ENCODE measurements at regions of chr15 and their contacts with region 1.

Region 1: DNA sequence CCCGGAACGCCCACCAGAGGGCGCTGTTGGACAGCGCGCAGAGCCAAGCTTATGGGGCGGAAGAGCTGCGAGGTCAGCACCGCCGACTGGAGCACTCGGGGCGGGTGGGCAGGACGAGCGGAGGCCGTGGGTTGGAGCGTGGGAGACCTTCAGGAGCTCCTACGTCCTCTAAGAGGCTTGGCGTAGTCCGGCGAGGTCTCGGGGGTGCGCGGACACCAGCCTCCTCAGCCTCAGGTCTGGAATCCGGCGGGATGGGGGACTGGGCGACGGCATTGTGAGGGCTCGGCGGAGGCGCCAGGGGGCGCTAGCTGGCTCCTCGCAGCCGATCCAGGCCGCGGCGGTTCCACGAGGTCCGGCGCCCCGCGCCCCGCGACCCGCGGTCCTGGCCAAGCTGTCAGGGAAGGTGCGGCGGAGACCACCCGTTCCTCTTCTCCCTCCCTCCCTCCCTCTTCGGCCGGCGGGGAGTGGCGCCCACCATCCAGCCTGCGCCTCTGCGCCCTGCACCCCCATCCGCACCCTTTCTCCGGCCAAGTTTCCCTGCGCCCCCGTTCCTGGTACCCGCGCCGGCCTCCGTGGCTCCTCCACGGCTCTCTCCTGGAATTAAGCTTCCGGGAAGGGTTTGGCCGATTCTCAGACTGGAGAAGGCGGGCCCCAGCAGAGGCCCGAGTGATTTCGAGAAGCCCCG is 24.3 kb upstream of the POLG start:
- DNase-seq: peak; percentile 87
- ATAC-seq: peak; percentile 94
- H3K4me3 Mint-ChIP-seq: peak overlapping the region; percentile 80
- H3K27ac Mint-ChIP-seq: no peak overlapping the region
- H3K4me1 Mint-ChIP-seq: peaks cover 12% of the 10 kb centered on the region
- H3K27me3 Mint-ChIP-seq: peaks cover 70% of the 10 kb centered on the region

Region 2: DNA sequence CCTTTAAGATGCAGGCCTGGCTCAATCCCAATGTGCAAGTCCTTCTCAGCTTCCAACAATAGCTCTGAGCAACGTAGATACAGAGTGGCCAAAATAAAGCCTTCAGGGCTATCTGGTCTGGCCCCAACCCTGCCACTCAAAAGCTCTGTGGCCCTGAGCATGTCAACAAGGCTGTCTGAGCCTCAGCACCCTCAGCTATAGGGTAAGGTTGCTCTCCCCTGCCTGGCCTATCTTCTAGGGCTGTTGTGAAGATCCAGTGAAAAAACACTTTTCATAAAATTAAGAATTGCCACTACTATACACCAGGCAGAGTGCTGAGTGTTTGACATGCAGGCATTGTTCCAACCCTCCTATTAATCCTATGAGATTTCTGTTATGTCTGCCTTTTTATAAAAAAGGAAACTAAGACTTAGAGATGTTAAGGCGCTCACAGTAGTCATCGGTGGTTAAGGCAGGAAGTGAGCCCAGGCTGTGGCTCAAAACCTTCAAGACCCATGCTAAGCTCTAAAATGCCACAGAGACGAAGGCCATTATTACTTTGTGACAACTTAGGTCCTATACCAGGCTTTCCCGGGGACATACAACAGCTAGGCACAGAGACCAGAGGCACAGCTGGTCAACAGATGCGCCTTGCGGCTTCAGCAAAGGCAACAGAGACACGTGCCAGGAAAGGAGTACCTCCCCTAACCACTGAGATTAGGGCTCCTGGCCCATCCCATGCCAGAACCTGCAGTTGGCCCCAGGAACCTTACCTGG is 29.4 kb before region 1 on chr15:
- CTCF ChIA-PET with region 1: interaction called, 58 read pairs
- POLR2A ChIA-PET with region 1: no interaction called
- DNase-seq: peak; percentile 73
- ATAC-seq: peak; percentile 50
- H3K4me3 Mint-ChIP-seq: peak overlapping the region; percentile 75
- H3K27ac Mint-ChIP-seq: peak overlapping the region; percentile 86
- H3K4me1 Mint-ChIP-seq: peaks cover 51% of the 10 kb centered on the region
- H3K27me3 Mint-ChIP-seq: no peaks in the 10 kb centered on the region

Region 3: DNA sequence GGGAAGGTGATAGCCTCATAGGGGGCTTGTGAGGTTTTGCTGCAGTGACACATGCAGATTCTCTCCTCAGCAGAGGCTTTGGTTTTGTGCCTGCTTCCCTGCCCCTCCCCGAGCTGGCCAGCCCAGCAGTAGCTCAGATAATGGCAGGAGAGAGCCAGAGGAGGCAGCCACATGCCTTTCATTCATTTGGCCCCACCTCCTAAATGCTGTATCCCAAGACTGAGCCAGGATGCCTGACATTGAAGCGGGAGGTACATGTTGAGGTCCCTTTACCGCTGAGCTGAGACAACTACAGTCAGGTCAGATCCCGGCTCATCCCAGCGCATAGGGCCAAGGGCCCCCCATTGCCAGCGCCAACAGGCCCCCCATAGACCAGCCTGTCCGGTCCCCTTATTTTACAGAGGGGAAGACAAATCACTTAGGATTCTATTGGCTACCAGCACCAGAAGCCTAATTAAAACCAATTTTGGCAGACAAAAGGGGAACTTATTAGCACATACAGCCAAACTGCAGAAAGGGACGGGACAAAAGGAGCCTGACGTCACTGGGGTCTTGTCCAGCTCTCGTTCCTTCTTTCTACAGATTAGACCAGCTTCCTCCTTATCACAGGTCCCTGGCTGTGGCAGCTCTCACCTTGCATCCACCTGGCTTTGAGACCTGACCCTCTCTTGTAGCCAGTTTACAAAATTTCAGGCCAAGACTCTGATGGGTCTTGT is 12.2 kb before region 1 on chr15:
- CTCF ChIA-PET with region 1: interaction called, 58 read pairs
- POLR2A ChIA-PET with region 1: no interaction called
- DNase-seq: no peak
- ATAC-seq: no peak
- H3K4me3 Mint-ChIP-seq: no peak overlapping the region
- H3K27ac Mint-ChIP-seq: no peak overlapping the region
- H3K4me1 Mint-ChIP-seq: no peaks in the 10 kb centered on the region
- H3K27me3 Mint-ChIP-seq: peaks cover 18% of the 10 kb centered on the region

Region 4: DNA sequence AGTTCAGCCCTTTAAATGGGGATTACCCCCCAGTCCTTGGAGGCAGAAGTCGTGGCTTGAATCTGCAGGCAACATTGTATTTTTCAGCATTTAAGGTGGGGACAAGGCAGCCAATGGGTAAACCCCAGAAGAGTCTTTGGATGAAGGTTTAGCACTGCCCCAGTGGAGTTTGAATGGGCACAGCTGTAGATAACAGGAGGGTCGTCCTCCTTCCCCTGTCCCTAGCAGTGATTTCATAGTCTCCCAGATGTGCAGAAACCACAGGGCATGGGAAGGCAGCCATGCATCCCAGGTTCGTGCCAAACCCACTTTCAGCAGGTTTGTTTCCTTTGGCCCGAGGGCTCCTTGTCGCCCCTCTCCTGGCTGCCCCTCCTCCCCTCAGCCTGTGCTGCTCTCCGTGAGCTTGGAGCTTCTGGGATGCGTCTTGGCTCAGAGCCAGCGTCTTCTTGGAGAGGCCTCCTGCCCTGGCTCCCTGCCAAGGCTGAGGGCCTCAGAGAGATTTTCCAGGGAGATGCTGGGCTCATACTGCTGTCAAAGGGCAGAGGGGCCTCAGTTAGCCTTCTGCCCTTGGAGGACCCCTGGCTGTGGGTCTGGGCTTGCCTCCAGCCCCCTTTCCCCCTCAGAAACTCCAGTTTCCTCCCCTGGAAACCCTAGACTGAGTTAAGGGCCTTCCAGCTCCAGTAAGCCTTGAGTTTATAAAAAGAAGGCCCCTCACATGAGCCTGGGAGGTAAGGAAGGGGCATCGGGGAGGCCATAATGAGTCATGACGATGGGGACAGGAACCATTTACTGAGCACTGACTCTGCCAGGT is 24.7 kb after region 1 on chr15:
- CTCF ChIA-PET with region 1: interaction called, 33 read pairs
- POLR2A ChIA-PET with region 1: interaction called, 3 read pairs
- DNase-seq: no peak
- ATAC-seq: no peak
- H3K4me3 Mint-ChIP-seq: no peak overlapping the region
- H3K27ac Mint-ChIP-seq: no peak overlapping the region
- H3K4me1 Mint-ChIP-seq: no peaks in the 10 kb centered on the region
- H3K27me3 Mint-ChIP-seq: peaks cover 40% of the 10 kb centered on the region

Region 5: GRCh38 chr15:89416141-89416853 is 57.4 kb after region 1 on chr15:
- CTCF ChIA-PET with region 1: interaction called, 163 read pairs
- POLR2A ChIA-PET with region 1: no interaction called
- DNase-seq: peak; percentile 84
- ATAC-seq: peak; percentile 82
- H3K4me3 Mint-ChIP-seq: no peak overlapping the region
- H3K27ac Mint-ChIP-seq: no peak overlapping the region
- H3K4me1 Mint-ChIP-seq: peaks cover 8% of the 10 kb centered on the region
- H3K27me3 Mint-ChIP-seq: peaks cover 77% of the 10 kb centered on the region

Region 6: GRCh38 chr15:89436570-89437316 is 77.8 kb after region 1 on chr15:
- CTCF ChIA-PET with region 1: interaction called, 19 read pairs
- POLR2A ChIA-PET with region 1: no interaction called
- DNase-seq: no peak
- ATAC-seq: no peak
- H3K4me3 Mint-ChIP-seq: no peak overlapping the region
- H3K27ac Mint-ChIP-seq: no peak overlapping the region
- H3K4me1 Mint-ChIP-seq: peaks cover 5% of the 10 kb centered on the region
- H3K27me3 Mint-ChIP-seq: peaks cover 15% of the 10 kb centered on the region

Region 7: DNA sequence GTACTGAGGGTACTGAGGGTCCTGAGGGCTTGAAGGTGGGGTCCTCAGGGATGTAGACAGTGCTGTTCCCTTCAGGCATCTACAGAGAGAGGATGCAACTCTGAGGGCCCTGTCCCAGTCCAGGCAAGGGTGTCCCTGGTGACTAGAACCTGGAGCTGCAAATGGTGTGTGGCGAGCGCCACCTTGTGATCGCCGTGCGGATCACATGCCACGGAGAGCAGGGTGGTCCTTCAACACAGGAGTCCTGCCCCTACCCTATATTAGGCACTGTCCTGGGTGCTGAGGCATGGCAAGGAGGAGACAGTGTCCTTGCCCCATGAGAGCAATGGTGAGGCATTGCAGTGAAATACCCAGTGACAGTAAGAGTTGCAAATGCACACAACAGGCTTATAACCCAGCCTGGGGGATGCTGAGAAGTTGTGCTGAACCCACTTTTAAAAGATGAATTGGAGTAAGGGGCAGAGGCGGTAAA is 113.9 kb after region 1 on chr15:
- CTCF ChIA-PET with region 1: interaction called, 48 read pairs
- POLR2A ChIA-PET with region 1: no interaction called
- DNase-seq: peak; percentile 60
- ATAC-seq: peak; percentile 75
- H3K4me3 Mint-ChIP-seq: no peak overlapping the region
- H3K27ac Mint-ChIP-seq: no peak overlapping the region
- H3K4me1 Mint-ChIP-seq: no peaks in the 10 kb centered on the region
- H3K27me3 Mint-ChIP-seq: peaks cover 26% of the 10 kb centered on the region